Activated T-helper 1 cell treated with anti-CD3 and anti-CD28 coated beads, Interleukin-12 subunit alpha, Interleukin-12 subunit beta, Interleukin-2, Interleukin-4 antibody, amounts not matched to agents 30 ng/mL and 10 ng/mL and 1 ng/mL, durations not matched to agents 14 hours and 24 hours and 36 hours (primary cell): ENCODE measurements at regions of chr6 and their contacts with region 1.

Region 1: DNA sequence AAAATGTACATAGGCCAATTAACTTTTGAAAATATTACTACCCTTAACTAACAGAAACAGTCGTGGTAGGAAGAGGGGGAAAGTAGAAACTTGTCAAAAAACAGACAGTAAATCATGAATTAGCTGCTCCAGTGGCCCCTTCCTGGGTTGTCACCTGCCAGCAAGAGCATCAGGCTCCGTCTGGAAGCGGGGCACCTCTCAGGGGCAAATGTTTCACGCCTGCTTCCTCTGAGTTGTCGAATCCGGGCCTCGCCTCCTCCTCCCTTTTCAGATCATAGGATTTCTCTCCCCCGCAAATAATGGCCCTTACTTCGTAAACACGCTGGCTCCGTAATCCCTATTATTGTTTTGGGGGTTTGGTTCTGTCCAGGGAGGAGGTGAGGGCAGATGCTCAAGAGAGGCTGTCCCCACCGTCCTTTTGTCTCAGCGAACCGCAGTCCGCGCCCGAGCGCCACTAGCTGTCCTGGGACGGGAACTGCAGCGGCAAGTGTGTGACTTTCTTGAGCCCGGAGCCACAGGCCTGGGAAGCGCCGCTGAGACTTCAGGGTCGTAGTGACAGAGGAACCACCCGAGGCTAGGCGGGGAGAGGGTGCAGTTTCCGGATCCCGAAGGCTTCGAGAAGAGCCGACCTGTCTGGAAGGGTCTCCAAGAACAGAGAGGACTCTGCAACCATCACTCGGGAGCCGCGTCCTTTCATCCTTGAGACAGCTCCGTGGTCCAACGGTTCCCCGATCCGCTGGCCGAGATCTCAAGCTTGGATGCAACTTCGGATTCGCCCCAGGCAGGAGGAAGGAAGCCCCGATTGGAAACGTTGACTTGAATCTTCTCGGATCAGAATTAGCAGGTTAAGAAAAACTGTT is 214.5 kb upstream of the ZNF184 start:
- DNase-seq: peak; percentile 74
- H3K4me3 Mint-ChIP-seq: peak overlapping the region; percentile 88
- H3K27ac Mint-ChIP-seq: peak overlapping the region; percentile 91
- H3K4me1 Mint-ChIP-seq: peaks cover 26% of the 10 kb centered on the region
- H3K27me3 Mint-ChIP-seq: peaks cover 24% of the 10 kb centered on the region

Region 2: DNA sequence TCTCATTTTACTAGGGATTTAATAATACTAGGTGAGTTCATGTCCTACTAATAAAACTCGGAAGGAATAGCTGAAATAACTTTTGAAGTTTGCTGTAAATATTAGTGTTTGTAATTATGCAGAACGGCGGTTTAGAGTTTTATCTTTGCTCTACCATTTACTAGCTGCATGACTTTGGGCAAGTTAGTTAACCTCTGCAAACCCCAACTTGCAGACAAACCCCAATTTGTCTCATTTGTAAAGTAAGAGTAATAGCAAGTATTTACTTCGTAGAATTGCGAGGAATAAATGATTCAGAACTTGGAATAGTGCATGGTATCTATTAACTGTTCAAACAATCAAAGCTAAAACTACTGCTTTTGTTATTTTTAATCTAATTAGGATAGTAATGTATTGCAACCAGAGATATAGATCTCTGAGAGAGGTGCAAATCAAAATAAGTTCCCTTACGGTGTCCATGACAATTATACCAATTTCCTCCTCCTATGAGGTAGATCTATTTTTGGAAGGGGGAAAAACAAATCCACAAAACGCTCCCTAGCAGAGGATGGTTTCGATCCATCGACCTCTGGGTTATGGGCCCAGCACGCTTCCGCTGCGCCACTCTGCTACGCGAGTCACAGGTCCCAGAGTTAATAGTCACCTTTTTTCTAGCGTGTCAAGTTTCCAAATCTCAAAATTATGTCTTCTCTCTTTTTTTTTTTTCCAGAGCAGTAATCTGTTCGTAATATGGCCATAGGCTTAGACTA is 1357.4 kb before region 1 on chr6:
- intact Hi-C with region 1: loop called (anchors 5 kb)
- DNase-seq: peak; percentile 48
- H3K4me3 Mint-ChIP-seq: peak overlapping the region; percentile 82
- H3K27ac Mint-ChIP-seq: peak overlapping the region; percentile 93
- H3K4me1 Mint-ChIP-seq: peaks cover 58% of the 10 kb centered on the region
- H3K27me3 Mint-ChIP-seq: peaks cover 23% of the 10 kb centered on the region

Region 3: DNA sequence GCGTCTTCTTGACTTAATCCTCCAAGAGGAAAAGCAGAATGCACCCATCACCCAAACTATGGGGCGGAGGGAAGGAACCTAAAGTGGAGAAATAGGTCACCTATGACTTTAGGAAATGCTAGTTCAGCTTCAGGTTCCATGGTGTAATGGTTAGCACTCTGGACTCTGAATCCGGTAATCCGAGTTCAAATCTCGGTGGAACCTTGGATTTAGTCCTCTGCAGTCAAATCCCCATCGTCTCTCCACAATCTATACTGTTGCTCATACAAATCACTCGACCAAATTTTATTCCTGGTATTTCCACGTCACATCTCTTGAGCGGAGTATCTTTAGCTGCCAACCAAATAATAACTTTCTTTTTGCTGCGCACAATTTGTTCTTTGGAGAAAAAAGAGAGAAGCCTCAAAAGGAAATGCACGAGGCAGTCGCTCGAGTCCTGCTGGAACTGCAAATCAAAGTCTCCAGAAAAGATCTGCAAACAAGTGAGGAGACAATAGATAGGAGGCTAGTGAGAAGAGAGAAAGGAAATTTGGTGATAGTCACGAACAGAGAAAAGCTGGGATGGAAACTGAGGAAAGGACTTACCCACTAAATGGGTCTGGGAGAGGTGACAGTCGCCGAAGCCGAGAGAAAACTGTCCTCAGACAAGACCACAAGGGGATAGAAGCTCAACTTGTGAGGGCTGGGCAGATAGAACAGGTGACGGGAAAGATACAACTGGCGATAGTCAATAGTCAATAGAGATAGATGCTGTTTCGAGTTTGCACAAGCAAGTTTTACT is 391.9 kb before region 1 on chr6:
- intact Hi-C with region 1: loop called (anchors 5 kb)
- DNase-seq: no peak
- H3K4me3 Mint-ChIP-seq: no peak overlapping the region
- H3K27ac Mint-ChIP-seq: peak overlapping the region; percentile 32
- H3K4me1 Mint-ChIP-seq: no peaks in the 10 kb centered on the region
- H3K27me3 Mint-ChIP-seq: peaks cover 54% of the 10 kb centered on the region

Region 4: DNA sequence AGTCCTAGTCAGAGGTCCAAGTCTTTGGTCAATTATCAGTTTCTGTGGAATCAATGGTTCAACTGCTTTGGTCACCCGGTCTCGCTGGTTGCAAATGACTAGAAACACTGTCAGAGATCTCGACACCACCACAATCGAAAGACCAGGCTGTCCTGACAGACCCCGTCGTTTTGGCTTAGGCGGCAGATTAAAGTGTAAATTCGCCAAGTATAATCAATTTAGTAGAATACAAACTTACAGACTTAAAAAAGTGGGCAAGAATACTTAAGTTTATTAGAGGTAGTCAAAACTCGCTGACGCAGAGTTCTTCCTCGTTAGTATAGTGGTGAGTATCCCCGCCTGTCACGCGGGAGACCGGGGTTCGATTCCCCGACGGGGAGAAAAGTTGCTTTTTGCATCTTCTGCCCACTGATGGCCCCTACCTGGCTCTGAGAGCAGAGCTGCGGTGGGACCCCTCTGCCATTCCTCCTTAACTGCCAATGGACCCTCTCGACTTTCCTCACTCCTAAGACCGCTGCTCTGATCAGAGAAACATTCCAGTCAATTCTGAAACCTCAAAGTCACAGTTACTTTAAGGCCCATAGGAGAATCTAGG is 183.9 kb before region 1 on chr6:
- intact Hi-C with region 1: loop called (anchors 2 kb)
- DNase-seq: peak; percentile 60
- H3K4me3 Mint-ChIP-seq: peak overlapping the region; percentile 90
- H3K27ac Mint-ChIP-seq: peak overlapping the region; percentile 82
- H3K4me1 Mint-ChIP-seq: peaks cover 32% of the 10 kb centered on the region
- H3K27me3 Mint-ChIP-seq: peaks cover 42% of the 10 kb centered on the region

Region 5: DNA sequence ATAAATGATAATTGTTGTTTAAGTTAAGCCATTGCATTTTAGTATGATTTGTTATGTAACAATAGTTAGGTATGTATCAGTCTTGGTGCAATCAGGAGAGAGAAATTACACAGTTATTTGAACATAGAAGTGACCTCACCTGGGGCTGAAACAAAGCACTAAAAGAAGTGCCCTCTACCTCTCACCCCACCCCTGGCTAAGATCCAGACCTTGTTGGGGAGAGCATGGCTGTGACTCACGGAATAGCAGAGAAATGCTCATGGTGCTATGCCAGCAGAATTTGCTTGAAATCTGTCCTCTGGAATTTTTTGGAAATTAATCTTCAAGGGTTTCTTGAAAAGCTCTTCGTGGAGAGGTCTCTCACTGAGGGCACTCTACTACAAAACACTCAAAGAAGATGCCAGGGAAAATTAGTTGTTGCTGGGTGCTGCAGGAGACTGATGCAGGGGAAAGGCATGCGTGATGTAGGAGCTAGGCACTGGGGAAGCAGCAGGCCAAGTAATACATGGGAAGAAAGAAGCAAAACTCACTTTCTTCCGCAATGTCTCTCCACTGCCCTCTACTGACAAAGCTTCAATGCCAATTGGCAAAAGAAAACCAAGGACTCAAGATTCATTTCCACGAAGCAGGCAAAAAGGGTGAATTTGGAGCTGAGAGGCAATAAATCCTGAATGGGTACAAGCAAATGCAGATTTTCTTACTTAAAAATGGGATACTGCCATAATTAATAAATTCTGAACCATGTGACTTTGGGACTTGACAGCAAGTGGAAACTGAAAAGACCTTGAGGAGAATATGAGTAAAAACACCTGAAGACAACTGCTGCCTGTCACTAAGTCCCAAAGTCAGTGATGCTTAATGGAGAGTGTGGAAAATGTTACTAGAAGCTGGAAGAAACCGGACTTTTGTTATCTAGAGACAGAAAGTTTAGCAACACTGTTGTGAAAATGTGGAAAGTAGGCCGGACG is 78.2 kb before region 1 on chr6:
- intact Hi-C with region 1: no loop called
- DNase-seq: no peak
- H3K4me3 Mint-ChIP-seq: no peak overlapping the region
- H3K27ac Mint-ChIP-seq: no peak overlapping the region
- H3K4me1 Mint-ChIP-seq: peaks cover 18% of the 10 kb centered on the region
- H3K27me3 Mint-ChIP-seq: peaks cover 28% of the 10 kb centered on the region

Region 6: GRCh38 chr6:27672113-27672799 is 15.1 kb before region 1 on chr6:
- intact Hi-C with region 1: loop called (anchors 2 kb)
- DNase-seq: peak; percentile 29
- H3K4me3 Mint-ChIP-seq: peak overlapping the region; percentile 28
- H3K27ac Mint-ChIP-seq: peak overlapping the region; percentile 29
- H3K4me1 Mint-ChIP-seq: peaks cover 53% of the 10 kb centered on the region
- H3K27me3 Mint-ChIP-seq: peaks cover 73% of the 10 kb centered on the region

Region 7: DNA sequence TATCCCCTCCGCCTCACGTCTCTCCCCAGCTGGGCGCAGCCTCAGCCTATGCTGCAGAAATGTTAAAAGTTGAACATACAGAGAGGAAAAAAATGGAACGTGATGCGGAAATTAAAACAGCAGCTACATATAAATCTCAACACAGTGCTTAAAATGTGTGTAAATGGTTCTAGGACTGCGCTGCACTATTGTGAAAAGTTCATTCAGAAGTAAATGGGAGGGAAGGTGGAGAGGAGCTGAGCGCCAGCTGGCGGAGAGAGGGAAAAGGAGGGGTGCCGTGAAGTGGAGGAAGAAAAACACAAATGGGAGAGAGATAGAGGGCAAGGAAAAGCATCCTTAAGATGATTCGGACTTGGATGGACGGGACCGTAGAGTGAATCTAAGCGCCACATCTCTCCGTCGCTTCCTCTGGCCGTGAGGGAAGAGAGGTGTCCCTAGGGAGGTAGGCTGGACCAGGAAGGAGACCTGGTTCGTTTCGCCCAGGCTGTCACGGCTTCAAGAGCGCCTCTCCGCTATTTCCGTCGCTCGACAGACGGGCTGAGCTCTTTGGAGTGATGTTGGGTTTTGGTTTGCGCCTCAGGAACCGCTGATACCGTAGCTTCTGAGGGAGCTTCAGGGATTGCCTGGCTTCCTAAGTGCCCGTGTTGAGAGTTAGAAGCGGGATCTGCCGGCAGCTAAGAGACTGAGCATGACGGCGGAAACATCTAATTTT is 1122.7 kb after region 1 on chr6:
- intact Hi-C with region 1: loop called (anchors 5 kb)
- DNase-seq: no peak
- H3K4me3 Mint-ChIP-seq: peak overlapping the region; percentile 43
- H3K27ac Mint-ChIP-seq: peak overlapping the region; percentile 49
- H3K4me1 Mint-ChIP-seq: peaks cover 19% of the 10 kb centered on the region
- H3K27me3 Mint-ChIP-seq: peaks cover 95% of the 10 kb centered on the region